Right ventricle myocardium superior (tissue), 1 donor: ENCODE measurements at regions of chr7 and their contacts with region 1.

Region 1: DNA sequence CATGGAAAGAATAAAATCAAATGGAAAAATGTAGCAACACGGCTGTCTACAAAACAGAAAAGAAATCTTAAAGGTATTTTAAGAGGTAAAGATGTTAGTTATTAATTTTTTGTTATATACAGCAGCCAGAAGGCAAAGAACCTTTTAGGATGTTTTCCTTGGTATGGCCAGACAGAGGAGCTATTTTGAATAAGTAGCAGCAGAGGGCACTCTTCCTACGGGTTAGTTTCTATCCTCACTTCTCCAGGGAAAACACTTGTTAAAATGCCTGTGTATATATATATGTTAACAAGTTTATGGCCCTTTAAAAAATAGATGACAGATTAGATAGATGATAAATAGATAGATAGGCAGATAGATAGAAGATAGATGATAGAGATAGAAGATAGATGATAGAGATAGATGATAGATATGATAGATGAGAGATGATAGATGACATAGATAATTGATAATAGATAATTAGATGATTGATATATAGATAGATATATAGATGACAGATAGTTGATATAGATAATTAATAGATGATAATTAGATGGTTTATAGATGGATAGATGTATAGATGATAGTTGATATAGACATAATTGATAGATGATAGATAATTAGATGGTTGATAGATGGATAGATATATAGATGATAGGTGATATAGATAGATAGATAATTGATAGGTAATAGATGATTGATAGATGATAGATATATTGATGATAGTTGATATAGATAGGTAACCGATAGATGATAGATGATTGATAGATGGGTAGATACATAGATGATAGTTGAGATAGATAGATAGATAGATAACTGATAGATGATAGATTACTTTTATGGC is 57.8 kb upstream of the WIPF3 start:
- DNase-seq: no peak
- ATAC-seq: peak; percentile 74

Region 2: GRCh38 chr7:29609162-29610037 is 139.1 kb before region 1 on chr7:
- intact Hi-C with region 1: no loop called
- DNase-seq: no peak
- ATAC-seq: peak; percentile 51

Region 3: DNA sequence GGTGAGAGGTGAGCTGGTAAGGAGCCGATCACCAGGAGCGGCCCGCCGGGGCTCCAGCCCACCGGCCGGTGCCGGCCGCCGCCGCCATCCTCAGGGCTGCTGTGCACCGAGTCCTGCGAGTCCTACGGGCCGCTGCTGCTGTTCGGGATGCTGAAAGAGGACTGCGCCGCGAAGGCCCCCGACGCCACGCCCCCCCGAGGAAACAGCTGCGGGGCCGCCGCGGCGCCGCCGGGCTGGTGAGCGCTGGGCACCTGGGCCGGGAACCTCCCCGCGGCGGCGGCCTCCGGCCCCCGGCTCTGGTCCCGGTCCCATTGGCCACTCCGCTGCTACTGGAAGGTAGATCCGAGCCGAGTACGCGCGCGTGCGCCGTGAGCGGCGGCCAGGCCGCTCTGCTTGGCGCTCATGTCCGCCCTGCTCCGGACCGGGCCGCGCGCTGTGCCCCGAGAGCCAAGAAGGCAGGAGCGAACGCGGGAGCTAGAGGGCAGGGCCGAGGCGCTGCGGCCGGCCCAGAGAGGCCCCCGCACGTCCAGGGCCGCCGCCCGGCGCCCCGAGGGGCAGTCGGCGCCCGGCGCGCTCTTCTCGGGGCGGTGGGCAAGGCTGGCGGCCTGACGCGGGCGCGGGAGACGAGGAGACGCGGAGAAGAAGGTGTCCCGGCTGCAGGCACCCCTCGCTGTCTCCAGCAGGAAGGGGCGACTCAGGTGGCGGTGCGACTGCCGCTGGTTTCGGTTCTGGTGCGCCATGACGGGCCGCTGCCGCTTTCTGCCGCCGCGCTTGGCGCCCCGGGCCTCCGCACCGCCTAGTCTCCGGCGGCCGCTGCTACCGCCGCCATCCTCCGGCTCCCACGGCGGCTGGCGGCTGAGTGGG is 63.5 kb before region 1 on chr7:
- intact Hi-C with region 1: no loop called
- DNase-seq: peak; percentile 90
- ATAC-seq: peak; percentile 94

Region 4: GRCh38 chr7:29806208-29806994 is 57.9 kb after region 1 on chr7 and contains the start of gene WIPF3:
- intact Hi-C with region 1: loop called (anchors 10 kb)
- DNase-seq: peak; percentile 52
- ATAC-seq: peak; percentile 84
- total RNA-seq, gene WIPF3: 5.5 TPM

Region 5: GRCh38 chr7:29921404-29922010 is 173.0 kb after region 1 on chr7:
- intact Hi-C with region 1: loop called (anchors 2 kb)
- DNase-seq: no peak
- ATAC-seq: peak; percentile 90